Endothelial cell of umbilical vein (primary cell): ENCODE measurements at regions of chr2 and their contacts with region 1.

Region 1: DNA sequence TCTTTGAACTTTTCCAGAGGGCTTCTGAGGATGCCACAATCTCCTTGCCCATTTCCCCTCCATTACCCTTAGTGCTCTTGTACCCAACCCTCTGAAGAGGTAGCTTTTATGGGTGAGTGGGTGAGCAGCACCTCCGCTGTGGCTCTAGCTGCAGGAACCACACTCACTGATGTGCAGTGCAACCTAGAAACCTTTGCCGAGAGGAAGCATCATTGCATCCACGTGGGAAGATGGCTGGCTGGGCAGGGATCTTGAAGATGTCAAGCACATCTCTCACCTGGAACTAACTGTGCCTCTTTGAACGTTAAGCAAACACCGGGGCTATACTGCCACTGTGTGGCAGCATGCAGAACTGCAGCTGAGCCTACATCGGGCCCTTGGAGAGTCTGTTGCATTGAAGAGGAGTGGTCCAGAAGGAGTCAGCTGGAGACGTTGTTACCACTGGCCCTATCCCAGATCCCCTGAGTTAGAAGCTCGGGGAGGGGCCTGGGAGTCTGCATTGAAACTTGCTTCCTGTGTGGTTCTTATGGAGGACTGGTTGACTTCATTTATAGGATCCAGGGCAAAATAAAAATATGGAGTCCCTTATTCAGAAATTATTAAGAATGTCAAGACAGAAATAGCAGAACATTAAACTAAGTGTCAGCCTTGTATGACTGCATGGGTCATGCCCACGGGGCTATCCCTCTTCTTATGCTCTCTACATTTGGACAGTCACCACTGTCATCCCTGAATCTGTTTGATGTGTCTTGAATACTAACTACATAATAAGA is 28.7 kb downstream of the IGFBP5 start:
- DNase-seq: peak; percentile 74
- H3K4me3 ChIP-seq: no peak overlapping the region
- H3K27ac ChIP-seq: no peak overlapping the region
- H3K4me1 ChIP-seq: peaks cover 8% of the 10 kb centered on the region
- H3K27me3 ChIP-seq: peaks cover 0 to 4% of the 10 kb centered on the region in 2 experiments
- CTCF ChIP-seq: peak; percentile 97 to 98
- POLR2A ChIP-seq: no peak

Region 2: GRCh38 chr2:216108967-216109921 is 557.4 kb before region 1 on chr2 and contains the start of gene XRCC5:
- CTCF ChIA-PET with region 1: interaction called, 7 read pairs
- POLR2A ChIA-PET with region 1: no interaction called
- dilution Hi-C with region 1: no loop called
- intact Hi-C with region 1: loop called (anchors 2 kb)
- DNase-seq: peak; percentile 99
- H3K4me3 ChIP-seq: peak within 1 kb of the TSS; percentile 85 to 100 (median 99)
- H3K27ac ChIP-seq: peak within 1 kb of the TSS; percentile 96
- H3K4me1 ChIP-seq: peaks cover 19% of the 10 kb centered on the region
- H3K27me3 ChIP-seq: peaks cover 4 to 5% of the 10 kb centered on the region in 2 experiments
- CTCF ChIP-seq: no peak
- POLR2A ChIP-seq: peak; percentile 77
- total RNA-seq, gene XRCC5: 313 and 319 TPM in 2 replicates

Region 3: GRCh38 chr2:216308576-216308975 is 358.1 kb before region 1 on chr2:
- CTCF ChIA-PET with region 1: no interaction called
- POLR2A ChIA-PET with region 1: no interaction called
- dilution Hi-C with region 1: no loop called
- intact Hi-C with region 1: loop called (anchors 5 kb)
- DNase-seq: no peak
- H3K4me3 ChIP-seq: no peak overlapping the region
- H3K27ac ChIP-seq: no peak overlapping the region
- H3K4me1 ChIP-seq: peaks cover 10% of the 10 kb centered on the region
- H3K27me3 ChIP-seq: no peaks in the 10 kb centered on the region
- CTCF ChIP-seq: no peak
- POLR2A ChIP-seq: no peak

Region 4: GRCh38 chr2:216596236-216596979 is 70.2 kb before region 1 on chr2:
- CTCF ChIA-PET with region 1: interaction called, 3 read pairs
- POLR2A ChIA-PET with region 1: no interaction called
- dilution Hi-C with region 1: no loop called
- intact Hi-C with region 1: loop called (anchors 5 kb)
- DNase-seq: peak; percentile 54
- H3K4me3 ChIP-seq: no peak overlapping the region
- H3K27ac ChIP-seq: no peak overlapping the region
- H3K4me1 ChIP-seq: peaks cover 10% of the 10 kb centered on the region
- H3K27me3 ChIP-seq: no peaks in the 10 kb centered on the region
- CTCF ChIP-seq: no peak
- POLR2A ChIP-seq: no peak

Region 5: GRCh38 chr2:216717491-216717901 is 50.8 kb after region 1 on chr2:
- CTCF ChIA-PET with region 1: no interaction called
- POLR2A ChIA-PET with region 1: no interaction called
- dilution Hi-C with region 1: no loop called
- intact Hi-C with region 1: no loop called
- DNase-seq: no peak
- H3K4me3 ChIP-seq: no peak overlapping the region
- H3K27ac ChIP-seq: no peak overlapping the region
- H3K4me1 ChIP-seq: no peaks in the 10 kb centered on the region
- H3K27me3 ChIP-seq: no peaks in the 10 kb centered on the region
- CTCF ChIP-seq: no peak
- POLR2A ChIP-seq: no peak